ENCODE measurements at regions of chr11 and their contacts with region 1.

Region 1: DNA sequence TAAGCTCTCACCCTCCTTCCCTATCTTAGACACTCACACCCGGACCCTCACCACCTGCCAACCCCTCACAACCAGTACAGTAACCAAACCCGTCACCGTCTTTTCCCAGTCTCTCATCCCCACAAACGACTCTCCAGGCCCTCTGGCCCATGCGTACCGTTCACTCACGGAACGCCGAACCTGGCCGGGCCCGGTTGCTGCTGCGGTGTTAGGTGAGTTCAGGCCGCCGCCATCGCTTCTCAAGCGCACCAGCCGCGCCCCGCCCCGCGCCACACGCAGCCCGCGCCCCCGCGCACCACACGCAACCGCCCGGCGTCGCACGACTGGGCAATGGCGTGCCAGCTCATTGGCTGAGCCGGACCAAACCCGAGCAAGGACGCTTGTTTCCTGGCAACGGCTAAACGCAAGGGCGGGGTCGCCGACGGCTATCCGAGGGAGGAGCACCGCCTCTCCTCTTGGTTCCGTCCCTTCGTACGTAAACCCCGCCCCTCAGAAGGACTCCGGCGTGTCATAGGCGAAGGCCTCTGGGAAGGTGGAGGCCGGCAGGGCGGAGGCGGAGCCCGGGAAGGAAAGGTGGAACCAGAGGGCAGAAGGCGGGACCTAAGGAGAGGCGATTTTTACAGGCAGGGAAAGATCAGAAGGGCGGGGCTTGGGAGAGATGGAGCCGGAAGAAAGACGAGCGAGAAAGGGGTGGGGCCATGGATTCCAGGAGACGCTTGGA is at the start of gene FHIP1B:
- DNase-seq: peak; percentile 100
- H3K4me3 ChIP-seq: peak within 1 kb of the TSS; percentile 69 to 80
- H3K27ac ChIP-seq: peak within 1 kb of the TSS; percentile 76
- H3K4me1 ChIP-seq: peaks cover 25% of the 10 kb centered on the region
- H3K27me3 ChIP-seq: no peaks in the 10 kb centered on the region
- CTCF ChIP-seq: no peak
- POLR2A ChIP-seq: peak in 1 of 2 donors; percentile 29
- total RNA-seq, gene FHIP1B: 65.1 TPM

Region 2: GRCh38 chr11:6320411-6321155 is 86.0 kb after region 1 on chr11 and contains the start of gene CAVIN3:
- intact Hi-C with region 1: loop called (anchors 10 kb)
- DNase-seq: peak in 1 of 2 donors; percentile 91
- H3K4me3 ChIP-seq: peak within 1 kb of the TSS; percentile 69 to 82
- H3K27ac ChIP-seq: peak within 1 kb of the TSS; percentile 100
- H3K4me1 ChIP-seq: peaks cover 58% of the 10 kb centered on the region
- H3K27me3 ChIP-seq: no peaks in the 10 kb centered on the region
- CTCF ChIP-seq: no peak
- POLR2A ChIP-seq: no peak
- total RNA-seq, gene CAVIN3: 156 TPM